Activated CD4-positive, alpha-beta T cell treated with anti-CD3 and anti-CD28 coated beads for 36 hours (primary cell): ENCODE measurements at regions of chr3 and their contacts with region 1.

Region 1: GRCh38 chr3:32947789-32948238 is 3.6 kb upstream of the CCR4 start:
- DNase-seq: peak; percentile 97
- ATAC-seq: peak; percentile 72
- H3K4me3 Mint-ChIP-seq: no peak overlapping the region
- H3K27ac Mint-ChIP-seq: no peak overlapping the region
- H3K4me1 Mint-ChIP-seq: peaks cover 49% of the 10 kb centered on the region
- H3K27me3 Mint-ChIP-seq: no peaks in the 10 kb centered on the region

Region 2: DNA sequence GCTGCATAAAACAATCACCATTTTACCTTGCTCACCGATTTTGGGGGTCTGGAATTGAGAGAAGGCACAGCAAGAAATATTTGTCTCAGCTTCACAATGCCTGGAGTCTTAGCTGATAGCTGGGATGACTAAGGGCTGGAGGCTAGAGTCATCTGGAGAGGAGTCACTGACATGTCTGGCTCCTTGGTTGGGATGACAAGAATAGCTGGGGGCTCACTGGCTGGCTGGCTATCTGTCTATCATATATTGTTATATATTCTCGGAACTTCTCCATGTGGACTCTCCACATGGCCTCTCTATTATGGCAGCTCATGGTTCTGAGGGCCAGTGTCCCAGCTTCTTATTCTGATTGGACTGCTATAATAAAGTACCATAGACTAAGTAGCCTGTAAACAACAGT is 150.0 kb before region 1 on chr3:
- CTCF ChIA-PET with region 1: no interaction called
- POLR2A ChIA-PET with region 1: no interaction called
- intact Hi-C with region 1: no loop called
- DNase-seq: no peak
- ATAC-seq: no peak
- H3K4me3 Mint-ChIP-seq: no peak overlapping the region
- H3K27ac Mint-ChIP-seq: no peak overlapping the region
- H3K4me1 Mint-ChIP-seq: no peaks in the 10 kb centered on the region
- H3K27me3 Mint-ChIP-seq: peaks cover 2% of the 10 kb centered on the region

Region 3: GRCh38 chr3:32992322-32992692 is 44.5 kb after region 1 on chr3:
- CTCF ChIA-PET with region 1: interaction called, 11 read pairs
- POLR2A ChIA-PET with region 1: interaction called, 6 read pairs
- intact Hi-C with region 1: loop called (anchors 1 to 2 kb)
- DNase-seq: no peak
- ATAC-seq: peak; percentile 6
- H3K4me3 Mint-ChIP-seq: peak overlapping the region; percentile 62
- H3K27ac Mint-ChIP-seq: peak overlapping the region; percentile 95
- H3K4me1 Mint-ChIP-seq: peaks cover 80% of the 10 kb centered on the region
- H3K27me3 Mint-ChIP-seq: peaks cover 2% of the 10 kb centered on the region

Region 4: GRCh38 chr3:33030802-33031201 is 83.0 kb after region 1 on chr3:
- CTCF ChIA-PET with region 1: interaction called, 7 read pairs
- POLR2A ChIA-PET with region 1: no interaction called
- intact Hi-C with region 1: loop called in 1 of 2 experiments (anchors 1 kb)
- DNase-seq: peak; percentile 73
- ATAC-seq: peak; percentile 91
- H3K4me3 Mint-ChIP-seq: no peak overlapping the region
- H3K27ac Mint-ChIP-seq: peak overlapping the region; percentile 51
- H3K4me1 Mint-ChIP-seq: peaks cover 31% of the 10 kb centered on the region
- H3K27me3 Mint-ChIP-seq: no peaks in the 10 kb centered on the region

Region 5: DNA sequence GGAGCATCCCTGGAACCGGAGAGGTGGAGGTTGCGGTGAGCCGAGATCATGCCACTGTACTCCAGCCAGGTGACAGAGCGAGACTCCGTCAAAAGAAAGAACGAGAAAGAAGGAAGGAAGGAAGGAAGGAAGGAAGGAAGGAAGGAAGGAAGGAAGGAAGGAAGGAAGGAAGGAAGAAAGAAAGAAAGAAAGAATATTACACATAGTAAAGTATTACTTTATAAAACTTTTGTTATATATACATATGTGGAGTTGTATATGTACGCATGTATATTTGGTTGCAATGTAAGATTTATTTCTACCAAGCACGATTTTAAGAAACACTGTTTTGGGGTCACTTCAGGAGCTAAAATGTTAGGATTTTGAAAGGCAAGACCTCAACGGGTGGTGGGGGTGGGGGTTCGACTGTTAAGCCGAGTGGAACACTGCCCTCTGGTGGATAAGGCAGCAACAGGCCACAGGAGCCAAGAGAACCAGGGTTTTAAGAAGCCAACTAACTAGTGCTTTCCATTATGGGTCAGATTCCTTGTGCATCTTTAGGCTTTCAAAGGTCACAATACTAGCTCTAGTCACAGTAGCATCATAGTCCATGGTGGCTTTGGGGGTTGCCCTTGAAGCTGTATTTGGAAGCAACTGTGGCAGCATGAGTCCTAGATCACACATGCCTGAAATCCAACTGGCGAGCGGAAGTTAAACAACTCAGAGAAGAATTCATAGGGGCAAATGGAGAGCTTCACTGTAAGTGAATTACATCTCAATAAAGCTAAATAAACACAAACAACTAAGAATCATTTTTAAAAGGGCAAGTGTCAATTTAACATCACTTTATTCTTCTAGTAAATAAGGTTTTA is 126.6 kb after region 1 on chr3:
- CTCF ChIA-PET with region 1: interaction called, 190 read pairs
- POLR2A ChIA-PET with region 1: no interaction called
- intact Hi-C with region 1: loop called (anchors 1 kb)
- DNase-seq: peak; percentile 83
- ATAC-seq: peak; percentile 91
- H3K4me3 Mint-ChIP-seq: no peak overlapping the region
- H3K27ac Mint-ChIP-seq: peak overlapping the region; percentile 17
- H3K4me1 Mint-ChIP-seq: peaks cover 26% of the 10 kb centered on the region
- H3K27me3 Mint-ChIP-seq: no peaks in the 10 kb centered on the region

Region 6: GRCh38 chr3:33131331-33132018 is 183.7 kb after region 1 on chr3:
- CTCF ChIA-PET with region 1: interaction called, 25 read pairs
- POLR2A ChIA-PET with region 1: no interaction called
- intact Hi-C with region 1: loop called in 1 of 2 experiments (anchors 1 kb)
- DNase-seq: peak; percentile 54
- ATAC-seq: peak; percentile 63
- H3K4me3 Mint-ChIP-seq: no peak overlapping the region
- H3K27ac Mint-ChIP-seq: no peak overlapping the region
- H3K4me1 Mint-ChIP-seq: peaks cover 10% of the 10 kb centered on the region
- H3K27me3 Mint-ChIP-seq: no peaks in the 10 kb centered on the region

Region 7: GRCh38 chr3:33798411-33799201 is 850.8 kb after region 1 on chr3 and contains the start of gene PDCD6IP:
- CTCF ChIA-PET with region 1: no interaction called
- POLR2A ChIA-PET with region 1: no interaction called
- intact Hi-C with region 1: loop called in 1 of 2 experiments (anchors 10 kb)
- DNase-seq: peak; percentile 93
- ATAC-seq: peak; percentile 88
- H3K4me3 Mint-ChIP-seq: peak within 1 kb of the TSS; percentile 82
- H3K27ac Mint-ChIP-seq: peak within 1 kb of the TSS; percentile 95
- H3K4me1 Mint-ChIP-seq: peaks cover 51% of the 10 kb centered on the region
- H3K27me3 Mint-ChIP-seq: no peaks in the 10 kb centered on the region
- total RNA-seq, gene PDCD6IP: 141 to 150 TPM